Activated naive CD4-positive, alpha-beta T cell treated with anti-CD3 and anti-CD28 coated beads for 36 hours (primary cell): ENCODE measurements at regions of chr2 and their contacts with region 1.

Region 1: DNA sequence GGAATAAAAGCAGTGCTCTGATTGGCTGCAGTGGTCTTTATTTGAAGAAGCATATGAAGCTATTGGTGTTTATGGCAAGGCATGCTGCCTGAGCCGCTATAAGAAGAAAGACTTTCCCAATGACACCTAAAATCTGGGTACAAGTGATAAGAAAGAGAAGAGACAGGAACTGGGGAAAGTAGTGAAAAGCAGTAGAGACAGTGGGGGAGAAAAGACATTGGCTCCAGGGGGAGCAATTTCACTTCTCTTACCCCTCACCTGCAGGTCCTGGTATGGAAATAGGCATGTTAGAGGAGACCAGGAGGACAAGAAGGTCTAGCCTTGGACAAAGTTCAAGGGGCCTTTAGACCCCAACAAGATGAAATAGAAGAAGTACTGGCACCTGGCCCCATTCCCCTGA is 47.1 kb downstream of the PLCL1 start:
- DNase-seq: peak; percentile 52
- H3K4me3 Mint-ChIP-seq: no peak overlapping the region
- H3K27ac Mint-ChIP-seq: no peak overlapping the region
- H3K4me1 Mint-ChIP-seq: peaks cover 89% of the 10 kb centered on the region
- H3K27me3 Mint-ChIP-seq: no peaks in the 10 kb centered on the region

Region 2: GRCh38 chr2:196742685-196743084 is 1108.8 kb before region 1 on chr2:
- CTCF ChIA-PET with region 1: no interaction called
- intact Hi-C with region 1: no loop called
- DNase-seq: no peak
- H3K4me3 Mint-ChIP-seq: no peak overlapping the region
- H3K27ac Mint-ChIP-seq: no peak overlapping the region
- H3K4me1 Mint-ChIP-seq: no peaks in the 10 kb centered on the region
- H3K27me3 Mint-ChIP-seq: peaks cover 2% of the 10 kb centered on the region

Region 3: DNA sequence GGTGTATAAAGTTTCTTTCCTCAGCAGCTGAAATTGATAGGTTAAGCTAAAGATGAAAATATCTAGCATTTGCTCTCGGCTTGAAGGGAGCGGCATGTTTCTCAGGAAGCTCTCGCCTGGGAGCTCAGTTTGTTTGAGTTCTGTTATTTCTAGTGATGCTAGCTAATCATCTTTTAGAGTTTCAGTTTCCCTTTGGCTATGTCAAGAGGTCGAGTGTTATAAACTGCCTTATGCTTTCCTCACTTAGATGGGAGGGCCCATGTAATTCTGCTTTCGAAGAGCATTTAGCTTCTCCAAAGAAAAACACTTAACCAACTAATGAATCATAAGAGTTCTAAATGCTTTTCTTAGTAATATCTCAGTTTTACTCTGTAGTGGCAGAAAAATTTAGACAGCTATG is 13.4 kb before region 1 on chr2:
- CTCF ChIA-PET with region 1: interaction called, 11 read pairs
- intact Hi-C with region 1: loop called (anchors 1 kb)
- DNase-seq: peak; percentile 48
- H3K4me3 Mint-ChIP-seq: peak overlapping the region; percentile 56
- H3K27ac Mint-ChIP-seq: peak overlapping the region; percentile 63
- H3K4me1 Mint-ChIP-seq: peaks cover 59% of the 10 kb centered on the region
- H3K27me3 Mint-ChIP-seq: no peaks in the 10 kb centered on the region

Region 4: GRCh38 chr2:197889041-197889440 is 37.6 kb after region 1 on chr2:
- CTCF ChIA-PET with region 1: interaction called, 7 read pairs
- intact Hi-C with region 1: loop called (anchors 1 kb)
- DNase-seq: peak; percentile 76
- H3K4me3 Mint-ChIP-seq: peak overlapping the region; percentile 21
- H3K27ac Mint-ChIP-seq: peak overlapping the region; percentile 94
- H3K4me1 Mint-ChIP-seq: peaks cover 74% of the 10 kb centered on the region
- H3K27me3 Mint-ChIP-seq: no peaks in the 10 kb centered on the region

Region 5: DNA sequence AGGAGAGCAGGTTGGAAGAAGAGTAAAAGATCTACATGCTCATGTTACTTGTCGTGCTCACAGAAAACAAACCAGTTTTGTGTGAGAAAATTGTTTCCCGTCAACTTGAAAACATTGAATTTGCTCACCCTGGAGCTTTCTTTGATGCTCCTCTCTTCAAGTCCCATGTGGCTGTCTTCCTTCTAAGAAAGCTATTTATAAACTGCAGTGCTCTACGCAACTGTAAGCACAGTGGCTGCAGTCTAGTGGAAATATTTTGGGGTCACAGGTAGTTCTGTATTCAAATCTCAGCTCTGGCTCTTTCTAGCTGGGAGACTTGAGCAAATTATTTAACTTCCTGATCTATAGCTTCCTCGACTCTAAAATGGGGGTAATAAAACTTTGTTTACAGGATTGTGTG is 164.8 kb after region 1 on chr2:
- CTCF ChIA-PET with region 1: no interaction called
- intact Hi-C with region 1: no loop called
- DNase-seq: no peak
- H3K4me3 Mint-ChIP-seq: peak overlapping the region; percentile 35
- H3K27ac Mint-ChIP-seq: no peak overlapping the region
- H3K4me1 Mint-ChIP-seq: peaks cover 50% of the 10 kb centered on the region
- H3K27me3 Mint-ChIP-seq: no peaks in the 10 kb centered on the region

Region 6: DNA sequence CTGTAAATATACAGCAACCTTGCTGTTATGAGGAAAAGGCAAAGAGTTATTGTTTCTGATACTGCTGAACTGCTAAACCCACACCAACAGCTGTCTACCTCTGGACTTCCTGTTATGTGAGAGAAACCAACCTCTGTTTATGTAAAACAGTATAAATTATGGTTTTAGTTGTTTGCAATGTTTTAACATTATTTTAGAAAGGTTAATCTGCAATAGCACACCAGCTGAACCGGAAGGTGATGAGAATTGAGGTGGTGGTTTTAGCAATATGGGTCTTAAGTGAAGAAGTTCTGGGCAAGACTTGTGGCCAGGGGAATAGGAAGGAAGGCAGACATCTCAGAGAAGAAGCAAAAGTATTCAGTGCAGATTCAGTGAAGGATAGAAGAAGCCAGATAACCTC is 190.7 kb after region 1 on chr2:
- CTCF ChIA-PET with region 1: interaction called, 3 read pairs
- intact Hi-C with region 1: loop called (anchors 2 kb)
- DNase-seq: no peak
- H3K4me3 Mint-ChIP-seq: no peak overlapping the region
- H3K27ac Mint-ChIP-seq: no peak overlapping the region
- H3K4me1 Mint-ChIP-seq: peaks cover 15% of the 10 kb centered on the region
- H3K27me3 Mint-ChIP-seq: no peaks in the 10 kb centered on the region

Region 7: GRCh38 chr2:198127627-198128026 is 276.2 kb after region 1 on chr2:
- CTCF ChIA-PET with region 1: interaction called, 13 read pairs
- intact Hi-C with region 1: loop called (anchors 1 kb)
- DNase-seq: peak; percentile 68
- H3K4me3 Mint-ChIP-seq: no peak overlapping the region
- H3K27ac Mint-ChIP-seq: no peak overlapping the region
- H3K4me1 Mint-ChIP-seq: no peaks in the 10 kb centered on the region
- H3K27me3 Mint-ChIP-seq: no peaks in the 10 kb centered on the region